ENCODE measurements at regions of chr6 and their contacts with region 1.

Region 1: GRCh38 chr6:149028767-149029405 is 282.1 kb downstream of the UST start:
- DNase-seq: peak; percentile 89
- H3K4me3 ChIP-seq: no peak overlapping the region
- H3K27ac ChIP-seq: no peak overlapping the region
- H3K4me1 ChIP-seq: no peaks in the 10 kb centered on the region
- CTCF ChIP-seq: peak; percentile 93

Region 2: GRCh38 chr6:148565930-148566663 is 462.8 kb before region 1 on chr6:
- CTCF ChIA-PET with region 1: no interaction called
- POLR2A ChIA-PET with region 1: no interaction called
- intact Hi-C with region 1: no loop called
- DNase-seq: no peak
- H3K4me3 ChIP-seq: no peak overlapping the region
- H3K27ac ChIP-seq: no peak overlapping the region
- H3K4me1 ChIP-seq: no peaks in the 10 kb centered on the region
- CTCF ChIP-seq: no peak

Region 3: DNA sequence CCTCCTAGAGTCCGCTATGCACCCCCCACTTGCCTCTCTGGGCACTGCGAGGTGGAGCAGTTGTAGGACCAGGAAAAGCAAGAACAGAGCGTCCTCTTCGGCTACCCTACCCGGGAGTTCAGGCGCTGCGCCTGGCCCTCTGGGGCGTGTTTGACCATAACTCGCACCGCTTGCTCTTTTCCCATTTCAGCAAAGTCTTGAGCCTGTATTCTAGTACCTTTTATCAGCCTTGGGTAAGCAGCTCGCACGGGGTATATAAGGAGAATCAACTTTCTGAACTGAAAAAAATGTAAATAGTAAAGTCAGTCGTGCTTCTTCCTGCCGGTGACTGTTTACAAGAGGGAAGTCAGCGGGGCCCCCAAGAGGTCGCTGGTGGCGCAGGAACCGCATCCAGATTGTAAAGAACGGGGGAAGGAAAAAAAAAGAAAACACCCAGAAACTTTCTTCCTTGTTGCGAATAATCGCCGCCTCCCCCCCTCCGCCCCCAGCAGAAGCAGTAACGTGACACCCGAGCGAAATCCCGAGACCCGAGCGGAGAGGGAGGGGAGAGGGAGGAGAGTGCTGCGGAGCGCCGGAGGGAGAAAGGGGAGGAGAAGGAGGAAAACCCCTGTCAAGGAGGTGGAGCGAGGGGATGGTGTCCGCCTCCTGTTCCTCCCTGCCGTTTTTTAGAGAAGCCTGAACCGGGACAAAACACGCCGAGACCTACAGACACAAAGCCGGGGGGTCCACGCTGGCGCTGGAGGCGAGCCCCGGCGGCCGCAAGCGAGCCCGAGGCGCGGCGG is 282.3 kb before region 1 on chr6 and contains the start of gene UST:
- CTCF ChIA-PET with region 1: no interaction called
- POLR2A ChIA-PET with region 1: no interaction called
- intact Hi-C with region 1: loop called (anchors 2 kb)
- DNase-seq: peak; percentile 83
- H3K4me3 ChIP-seq: peak within 1 kb of the TSS; percentile 84
- H3K27ac ChIP-seq: no peak within 1 kb of the TSS
- H3K4me1 ChIP-seq: peaks cover 14% of the 10 kb centered on the region
- CTCF ChIP-seq: peak; percentile 88
- total RNA-seq, gene UST: 0.59 and 1.4 TPM in 2 replicates

Region 4: DNA sequence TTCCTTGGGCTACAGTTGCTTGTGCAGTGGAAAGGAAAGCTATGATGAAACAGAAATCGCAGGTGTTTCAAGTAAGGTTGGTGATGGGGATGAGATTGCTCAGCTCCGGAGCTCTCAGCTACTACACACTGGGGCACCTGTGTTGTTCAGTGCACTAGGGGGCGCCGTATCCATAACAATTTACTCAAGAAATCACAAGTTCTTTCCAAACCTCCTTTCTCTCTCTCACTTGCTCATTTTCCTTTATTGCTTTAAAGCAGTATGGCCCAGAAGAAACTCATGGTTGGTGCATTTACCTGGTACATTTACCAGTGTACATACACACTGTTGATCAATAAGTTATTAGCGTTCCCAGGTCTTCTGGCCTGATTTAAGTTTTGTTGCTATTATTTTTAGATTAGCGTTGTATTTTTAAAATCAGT is 53.4 kb after region 1 on chr6:
- CTCF ChIA-PET with region 1: no interaction called
- POLR2A ChIA-PET with region 1: interaction called, 3 read pairs
- intact Hi-C with region 1: loop called (anchors 1 kb)
- DNase-seq: peak; percentile 77
- H3K4me3 ChIP-seq: no peak overlapping the region
- H3K27ac ChIP-seq: no peak overlapping the region
- H3K4me1 ChIP-seq: no peaks in the 10 kb centered on the region
- CTCF ChIP-seq: peak; percentile 86

Region 5: GRCh38 chr6:149112976-149113375 is 84.1 kb after region 1 on chr6:
- CTCF ChIA-PET with region 1: no interaction called
- POLR2A ChIA-PET with region 1: no interaction called
- intact Hi-C with region 1: no loop called
- DNase-seq: peak; percentile 16
- H3K4me3 ChIP-seq: no peak overlapping the region
- H3K27ac ChIP-seq: no peak overlapping the region
- H3K4me1 ChIP-seq: peaks cover 45% of the 10 kb centered on the region
- CTCF ChIP-seq: no peak

Region 6: DNA sequence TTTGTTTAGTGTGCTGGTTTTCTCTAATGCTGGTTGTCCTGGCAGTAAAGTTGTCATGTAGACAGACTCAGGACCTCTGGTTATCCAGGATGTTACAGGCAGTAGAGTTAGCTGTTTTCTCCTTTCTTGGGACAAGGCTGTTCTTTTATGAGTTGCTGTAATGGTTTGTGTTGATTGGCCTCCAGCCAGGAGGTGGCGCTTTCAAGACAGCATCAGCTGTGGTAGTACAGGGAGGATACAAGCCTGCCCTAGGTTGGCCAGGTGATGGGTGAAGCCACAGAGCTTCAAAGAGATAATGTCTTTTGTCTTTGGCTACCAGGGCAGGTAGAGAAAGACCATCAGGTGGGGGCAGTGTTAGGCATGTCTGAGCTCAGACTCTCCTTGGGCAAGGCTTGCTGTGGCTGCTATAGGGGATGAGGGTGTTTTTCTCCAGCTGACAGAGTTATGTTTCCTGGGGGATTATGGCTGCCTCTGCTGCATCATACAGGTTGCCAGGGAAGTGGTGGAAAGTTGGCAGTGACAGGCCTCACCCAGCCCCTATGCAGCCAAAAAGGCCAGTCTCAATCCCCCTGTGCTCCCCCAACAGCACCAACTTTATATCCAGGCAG is 161.4 kb after region 1 on chr6:
- CTCF ChIA-PET with region 1: no interaction called
- POLR2A ChIA-PET with region 1: no interaction called
- intact Hi-C with region 1: loop called (anchors 5 kb)
- DNase-seq: peak; percentile 63
- H3K4me3 ChIP-seq: no peak overlapping the region
- H3K27ac ChIP-seq: no peak overlapping the region
- H3K4me1 ChIP-seq: no peaks in the 10 kb centered on the region
- CTCF ChIP-seq: peak; percentile 84

Region 7: DNA sequence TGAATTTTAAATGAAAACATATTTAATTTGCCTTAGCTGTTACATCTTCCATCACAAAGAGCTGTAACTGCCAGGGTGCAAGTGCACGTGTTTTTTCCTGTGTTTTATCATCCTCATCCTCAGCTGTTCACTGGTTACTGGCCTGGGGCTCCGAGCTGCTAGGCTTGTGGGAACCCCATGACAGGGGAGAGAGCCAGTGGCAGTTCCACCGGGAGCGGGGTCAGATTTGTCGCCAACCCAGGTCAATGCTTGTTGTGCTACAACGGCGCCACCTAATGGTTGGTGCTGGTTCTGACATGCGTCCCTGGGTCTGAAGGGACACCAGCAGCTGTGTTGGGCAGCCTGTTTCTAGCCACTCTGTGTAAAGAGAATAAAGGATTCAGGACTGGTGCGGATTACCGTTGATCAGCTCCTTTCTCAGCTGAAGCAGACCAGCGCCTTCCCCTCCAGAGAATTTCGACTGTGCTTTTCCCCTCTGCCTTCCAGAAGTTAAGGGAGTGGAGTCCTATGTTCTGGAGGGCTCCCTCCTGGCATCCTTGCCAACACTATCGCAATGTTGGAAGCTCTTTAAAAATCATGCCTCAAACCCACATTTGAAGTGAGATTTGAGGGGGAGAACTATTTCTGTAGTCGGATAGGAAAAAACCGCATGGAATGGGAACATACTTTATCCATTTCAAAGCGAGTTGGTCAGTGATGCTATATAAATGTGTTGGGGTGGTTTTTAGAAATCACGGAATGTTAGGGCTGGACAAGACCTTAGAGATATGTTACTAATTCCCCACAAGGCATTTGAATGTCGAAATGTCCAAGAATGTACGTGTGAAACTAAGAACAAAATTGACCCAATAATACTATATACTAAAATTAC is 403.3 kb after region 1 on chr6:
- CTCF ChIA-PET with region 1: interaction called, 6 read pairs
- POLR2A ChIA-PET with region 1: no interaction called
- intact Hi-C with region 1: loop called (anchors 1 kb)
- DNase-seq: peak; percentile 88
- H3K4me3 ChIP-seq: no peak overlapping the region
- H3K27ac ChIP-seq: no peak overlapping the region
- H3K4me1 ChIP-seq: peaks cover 7% of the 10 kb centered on the region
- CTCF ChIP-seq: peak; percentile 95

Measured in OCI-LY7 (cell line).